ENCODE measurements at regions of chr1 and their contacts with region 1.

Region 1: DNA sequence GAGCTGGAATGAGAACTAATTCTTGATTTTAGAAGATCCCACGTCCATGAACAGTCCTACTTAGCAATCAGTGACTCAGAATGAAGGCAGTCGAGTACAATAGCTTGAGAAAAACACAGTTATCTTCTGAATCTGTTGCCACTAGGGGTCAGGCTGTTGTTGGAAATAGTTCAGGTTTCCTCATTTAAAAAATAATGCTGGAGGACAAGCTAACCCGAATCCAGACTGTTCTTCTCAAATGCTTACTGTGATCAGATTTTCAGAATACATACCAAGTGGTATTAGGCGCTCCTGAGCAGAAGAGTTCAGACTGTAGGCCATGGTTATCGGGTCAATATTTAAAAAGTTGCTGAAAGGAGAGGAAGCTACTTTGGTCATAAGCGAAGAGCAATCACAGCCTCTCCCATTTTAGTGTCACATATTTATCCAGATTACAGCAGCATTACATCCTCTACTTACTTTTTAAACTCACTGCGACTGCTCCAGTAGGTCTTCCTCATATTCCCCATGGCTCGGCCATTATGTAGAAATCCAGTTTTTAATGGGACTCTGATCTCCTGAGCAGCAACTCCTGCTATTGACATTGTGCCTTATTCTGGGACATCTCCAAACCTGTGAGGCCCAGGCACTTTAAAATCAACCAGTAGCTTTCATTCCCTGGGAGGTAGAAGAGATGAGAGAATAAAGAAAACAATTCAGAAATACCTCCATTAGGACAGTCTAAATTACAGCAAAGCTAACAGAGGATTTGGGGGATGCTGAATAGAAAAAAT is 10.9 kb downstream of the ERRFI1 start:
- DNase-seq: peak; percentile 68
- ATAC-seq: peak; percentile 57
- H3K4me3 ChIP-seq: no peak overlapping the region
- H3K4me3 Mint-ChIP-seq: no peak overlapping the region
- H3K27ac ChIP-seq: no peak overlapping the region
- H3K27ac Mint-ChIP-seq: no peak overlapping the region
- H3K4me1 ChIP-seq: peaks cover 3 to 8% of the 10 kb centered on the region in 2 donors
- H3K4me1 Mint-ChIP-seq: peaks cover 4% of the 10 kb centered on the region
- H3K27me3 ChIP-seq: peaks cover 0 to 25% (median 11%) of the 10 kb centered on the region in 4 experiments
- H3K27me3 Mint-ChIP-seq: peaks cover 27% of the 10 kb centered on the region
- CTCF ChIP-seq: peak; percentile 80

Region 2: DNA sequence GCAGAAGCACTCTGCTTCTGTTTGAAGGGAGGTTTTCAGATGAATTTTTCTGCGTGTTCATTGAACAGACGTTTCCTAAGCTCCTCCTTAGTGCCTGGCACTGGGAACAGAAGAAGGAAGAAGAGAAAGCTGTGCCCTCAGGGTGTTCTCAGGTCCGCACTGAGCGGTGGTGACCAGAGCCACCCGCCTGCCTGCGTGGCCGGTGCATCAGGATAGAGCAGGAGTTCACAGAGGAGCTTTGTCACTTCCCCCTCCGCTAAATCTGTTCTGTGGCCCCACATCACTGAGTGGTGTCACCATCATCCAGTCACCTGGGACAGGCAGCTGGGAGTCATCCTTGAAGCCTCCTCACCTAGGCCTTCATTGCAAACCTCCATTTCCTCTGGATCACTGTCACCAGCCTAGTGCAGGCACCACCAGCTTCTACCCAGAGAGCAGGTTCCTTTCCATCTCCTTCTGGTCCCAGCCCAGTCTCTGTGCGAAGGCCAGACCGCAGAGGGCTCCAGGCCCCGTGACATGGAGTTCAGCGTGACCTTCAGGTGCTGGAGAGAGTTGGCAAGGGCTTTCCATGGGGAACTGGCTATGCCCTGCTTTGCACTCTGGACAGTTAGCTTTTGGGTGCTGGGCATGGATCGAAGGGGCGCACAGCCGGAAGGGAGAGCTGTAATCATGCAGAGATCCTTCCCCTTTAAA is 32.0 kb before region 1 on chr1:
- CTCF ChIA-PET with region 1: interaction called, 40 read pairs
- POLR2A ChIA-PET with region 1: no interaction called
- intact Hi-C with region 1: no loop called
- DNase-seq: no peak
- ATAC-seq: no peak
- H3K4me3 ChIP-seq: no peak overlapping the region
- H3K4me3 Mint-ChIP-seq: no peak overlapping the region
- H3K27ac ChIP-seq: no peak overlapping the region
- H3K27ac Mint-ChIP-seq: no peak overlapping the region
- H3K4me1 ChIP-seq: peaks cover 4 to 6% of the 10 kb centered on the region in 2 donors
- H3K4me1 Mint-ChIP-seq: peaks cover 5% of the 10 kb centered on the region
- H3K27me3 ChIP-seq: no peaks in the 10 kb centered on the region
- H3K27me3 Mint-ChIP-seq: no peaks in the 10 kb centered on the region
- CTCF ChIP-seq: no peak

Region 3: DNA sequence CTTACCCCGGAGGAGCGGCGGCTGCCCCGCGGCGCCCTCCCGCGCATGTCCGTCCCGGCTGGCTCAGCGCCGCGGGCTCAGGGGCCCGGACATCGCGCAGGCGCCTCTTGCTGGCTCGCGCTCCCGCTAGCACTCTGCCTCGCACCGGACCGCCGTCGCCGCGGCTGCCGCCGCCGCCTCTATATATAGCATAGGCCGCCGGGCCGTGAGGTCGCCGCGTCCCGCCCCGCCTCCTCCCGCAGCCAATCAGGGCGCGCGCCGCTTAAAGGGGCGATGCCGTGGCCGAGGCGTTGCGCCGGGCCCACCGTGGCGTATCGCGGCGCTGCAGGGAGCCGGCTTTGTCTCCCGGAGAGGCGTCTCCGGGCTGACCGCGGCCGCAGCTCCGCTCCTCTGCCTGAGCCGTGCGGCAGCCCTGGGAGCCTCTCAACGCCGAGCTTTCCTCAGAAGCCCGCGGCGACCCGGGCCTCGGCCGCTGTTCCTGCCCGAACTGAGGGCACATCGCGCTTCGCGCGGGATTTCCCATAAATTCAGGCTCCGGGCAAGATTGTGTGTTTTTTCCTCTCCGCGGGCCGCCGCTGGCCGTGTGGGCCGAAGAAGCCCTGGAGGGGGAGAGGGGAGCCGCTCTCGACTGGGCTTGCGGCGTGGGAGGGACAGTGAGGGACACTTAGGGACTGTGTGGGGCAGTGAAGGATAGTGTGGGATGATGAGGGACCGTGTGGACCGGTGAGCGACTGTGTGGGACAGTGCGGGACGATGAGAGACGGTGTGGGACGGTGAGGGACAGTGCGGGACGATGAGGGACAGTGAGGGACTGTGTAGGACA is 11.1 kb after region 1 on chr1 and contains the start of gene ERRFI1:
- CTCF ChIA-PET with region 1: interaction called, 11 read pairs
- POLR2A ChIA-PET with region 1: no interaction called
- intact Hi-C with region 1: no loop called
- DNase-seq: peak; percentile 92
- ATAC-seq: peak; percentile 91
- H3K4me3 ChIP-seq: peak within 1 kb of the TSS in 4 of 5 experiments; percentile 48 to 68 (median 56)
- H3K4me3 Mint-ChIP-seq: peak within 1 kb of the TSS; percentile 90
- H3K27ac ChIP-seq: no peak within 1 kb of the TSS
- H3K27ac Mint-ChIP-seq: peak within 1 kb of the TSS; percentile 72
- H3K4me1 ChIP-seq: peaks cover 11 to 16% of the 10 kb centered on the region in 2 donors
- H3K4me1 Mint-ChIP-seq: peaks cover 10% of the 10 kb centered on the region
- H3K27me3 ChIP-seq: peaks cover 5 to 25% (median 15%) of the 10 kb centered on the region in 4 experiments
- H3K27me3 Mint-ChIP-seq: peaks cover 24% of the 10 kb centered on the region
- CTCF ChIP-seq: no peak
- total RNA-seq, gene ERRFI1: 1.5 and 2.0 TPM in 2 replicates

Region 4: GRCh38 chr1:8046461-8046860 is 31.2 kb after region 1 on chr1:
- CTCF ChIA-PET with region 1: no interaction called
- POLR2A ChIA-PET with region 1: no interaction called
- intact Hi-C with region 1: no loop called
- DNase-seq: no peak
- ATAC-seq: no peak
- H3K4me3 ChIP-seq: no peak overlapping the region
- H3K4me3 Mint-ChIP-seq: no peak overlapping the region
- H3K27ac ChIP-seq: no peak overlapping the region
- H3K27ac Mint-ChIP-seq: no peak overlapping the region
- H3K4me1 ChIP-seq: no peaks in the 10 kb centered on the region
- H3K4me1 Mint-ChIP-seq: no peaks in the 10 kb centered on the region
- H3K27me3 ChIP-seq: no peaks in the 10 kb centered on the region
- H3K27me3 Mint-ChIP-seq: peaks cover 20% of the 10 kb centered on the region
- CTCF ChIP-seq: no peak

Region 5: DNA sequence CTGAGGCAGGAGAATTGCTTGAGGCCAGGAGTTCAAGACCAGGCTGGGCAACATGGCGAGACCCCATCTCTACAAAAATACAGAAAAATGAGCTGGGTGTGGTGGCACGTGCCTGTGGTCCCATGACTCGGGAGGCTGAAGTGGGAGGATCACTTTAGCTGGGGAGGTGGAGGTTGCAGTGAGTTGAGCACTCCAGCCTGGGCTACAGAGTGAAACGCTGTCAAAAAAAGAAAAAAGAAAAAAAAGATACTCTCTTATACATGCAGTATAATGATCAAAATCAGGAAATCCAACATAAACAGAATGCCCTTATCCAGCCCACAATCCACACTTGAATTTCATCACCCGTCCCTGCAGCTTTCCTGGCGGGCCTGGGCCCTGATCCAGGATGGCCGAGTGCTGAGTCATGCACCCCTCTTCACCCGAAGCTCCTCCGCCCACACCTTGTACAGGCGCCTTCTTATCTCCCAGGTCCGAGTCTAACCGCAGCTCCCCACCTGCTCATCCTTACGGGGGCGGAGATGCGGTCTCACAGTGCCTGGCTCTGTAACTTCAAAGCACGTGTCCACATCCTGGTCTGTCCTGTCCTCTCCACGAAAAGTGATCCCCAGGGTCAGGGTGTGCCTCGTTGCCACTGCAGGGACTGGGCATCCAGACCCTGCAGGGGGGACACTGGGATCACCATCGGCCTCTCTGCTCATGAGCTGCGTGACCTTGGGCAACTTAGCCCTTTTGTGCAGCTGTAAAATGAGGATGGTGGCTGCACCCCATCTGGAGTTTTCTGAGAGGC is 182.5 kb after region 1 on chr1:
- CTCF ChIA-PET with region 1: no interaction called
- POLR2A ChIA-PET with region 1: no interaction called
- intact Hi-C with region 1: no loop called
- DNase-seq: no peak
- ATAC-seq: no peak
- H3K4me3 ChIP-seq: no peak overlapping the region
- H3K4me3 Mint-ChIP-seq: no peak overlapping the region
- H3K27ac ChIP-seq: no peak overlapping the region
- H3K27ac Mint-ChIP-seq: no peak overlapping the region
- H3K4me1 ChIP-seq: no peaks in the 10 kb centered on the region
- H3K4me1 Mint-ChIP-seq: no peaks in the 10 kb centered on the region
- H3K27me3 ChIP-seq: peaks cover 0 to 3% (median 0%) of the 10 kb centered on the region in 4 experiments
- H3K27me3 Mint-ChIP-seq: peaks cover 24% of the 10 kb centered on the region
- CTCF ChIP-seq: no peak

Region 6: DNA sequence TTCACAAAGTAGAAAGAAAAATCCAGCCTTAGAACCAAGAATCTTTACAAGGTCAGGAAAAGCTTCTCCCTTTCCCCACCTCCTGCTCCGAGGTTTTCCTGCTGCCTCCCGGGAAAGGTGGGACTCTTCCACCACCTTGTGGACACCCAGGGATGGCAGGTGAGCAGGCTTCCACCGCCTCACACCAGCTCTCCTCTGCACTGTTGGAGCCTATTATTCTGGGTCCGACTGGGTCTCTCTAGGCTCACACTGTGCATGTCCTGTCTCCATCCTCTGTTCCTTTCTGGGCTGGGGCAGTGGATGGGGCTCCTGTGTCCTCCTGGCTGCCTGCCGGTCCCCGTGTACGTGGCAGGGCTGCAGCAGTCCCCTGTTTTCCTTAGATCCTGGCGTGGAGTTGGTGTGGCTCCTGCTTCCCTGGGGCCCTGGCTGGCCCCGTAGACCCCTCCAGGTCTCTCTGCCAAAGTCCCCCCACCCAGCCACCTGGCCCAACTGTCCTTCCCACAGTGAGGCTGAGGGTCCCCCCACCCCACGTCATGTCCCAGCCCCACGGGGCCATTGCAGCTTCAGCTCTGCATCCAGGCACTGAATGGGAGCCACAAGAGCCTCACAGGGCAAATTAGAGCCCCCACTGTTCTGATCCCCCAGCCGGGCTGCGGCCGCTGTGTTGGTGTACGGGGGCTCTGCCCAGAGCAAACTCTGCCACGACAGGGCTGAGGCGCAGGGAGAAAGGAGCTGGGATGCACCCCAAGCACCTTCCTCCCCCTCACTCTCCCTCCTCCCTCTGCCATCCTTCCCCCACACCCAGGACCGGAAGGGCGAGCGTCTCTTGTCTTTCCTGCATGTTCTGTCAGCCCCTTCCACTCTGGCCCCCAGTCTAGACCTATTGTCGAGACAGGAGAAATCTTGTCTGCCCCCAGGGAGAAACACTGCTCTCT is 299.4 kb after region 1 on chr1:
- CTCF ChIA-PET with region 1: interaction called, 13 read pairs
- POLR2A ChIA-PET with region 1: no interaction called
- intact Hi-C with region 1: no loop called
- DNase-seq: no peak
- ATAC-seq: no peak
- H3K4me3 ChIP-seq: no peak overlapping the region
- H3K4me3 Mint-ChIP-seq: no peak overlapping the region
- H3K27ac ChIP-seq: no peak overlapping the region
- H3K27ac Mint-ChIP-seq: no peak overlapping the region
- H3K4me1 ChIP-seq: peaks cover 11 to 14% of the 10 kb centered on the region in 2 donors
- H3K4me1 Mint-ChIP-seq: peaks cover 11% of the 10 kb centered on the region
- H3K27me3 ChIP-seq: peaks cover 0 to 54% (median 19%) of the 10 kb centered on the region in 4 experiments
- H3K27me3 Mint-ChIP-seq: peaks cover 45% of the 10 kb centered on the region
- CTCF ChIP-seq: no peak